Activated T-helper 1 cell treated with anti-CD3 and anti-CD28 coated beads, Interleukin-12 subunit alpha, Interleukin-12 subunit beta, Interleukin-2, Interleukin-4 antibody, amounts not matched to agents 30 ng/mL and 10 ng/mL and 1 ng/mL, durations not matched to agents 14 hours and 24 hours and 36 hours (primary cell): ENCODE measurements at regions of chr14 and their contacts with region 1.

Region 1: DNA sequence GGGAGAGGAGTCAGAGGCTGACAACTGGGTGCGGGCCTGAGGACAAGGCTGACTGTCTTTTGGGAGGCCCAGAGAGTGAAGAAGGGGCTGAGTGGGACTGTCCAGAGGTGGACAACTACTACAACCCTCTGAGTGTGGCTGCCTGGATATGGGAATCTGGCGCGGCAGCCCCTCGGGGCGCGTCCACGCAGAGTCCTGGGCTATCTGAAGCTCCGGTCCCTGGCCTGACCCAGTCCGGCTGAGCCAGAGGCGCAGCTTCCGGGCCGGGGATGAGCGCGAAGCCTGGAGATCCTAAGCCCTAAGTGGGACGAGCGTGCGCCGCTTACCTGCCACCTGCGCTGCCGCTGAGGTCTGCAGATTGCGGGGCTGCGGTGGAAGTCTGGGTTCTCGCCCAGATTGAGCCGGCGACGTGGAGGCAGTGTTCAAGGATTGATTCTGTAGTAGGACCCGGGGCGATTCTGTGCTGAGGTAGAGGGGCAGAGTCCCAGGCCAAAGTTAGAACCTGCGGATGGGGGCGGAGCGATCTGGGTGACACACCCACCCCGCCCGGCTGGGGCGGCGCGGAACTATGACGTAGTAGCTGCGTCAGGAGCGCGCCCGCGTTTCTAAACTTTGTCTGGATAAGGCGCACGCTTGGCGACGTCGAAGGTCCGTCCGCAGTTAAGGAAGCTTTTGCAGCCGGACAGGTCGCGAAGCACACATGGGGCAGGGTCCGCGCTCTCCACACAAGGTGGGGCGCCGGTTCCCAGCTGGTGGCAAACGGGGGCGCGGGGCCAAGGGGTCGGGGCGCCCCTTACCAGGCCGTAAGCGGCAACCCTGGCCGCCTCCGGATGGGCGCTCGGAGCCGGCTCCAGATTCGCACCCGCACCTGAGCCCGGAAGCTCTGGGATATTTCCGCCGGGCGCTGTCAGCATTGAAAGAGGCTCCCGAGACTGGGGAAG is at the starts of genes DHRS1 and NOP9:
- DNase-seq: peak; percentile 90
- H3K4me3 Mint-ChIP-seq: peak within 1 kb of the TSS; percentile 94
- H3K27ac Mint-ChIP-seq: peak within 1 kb of the TSS; percentile 96
- H3K4me1 Mint-ChIP-seq: peaks cover 44% of the 10 kb centered on the region
- H3K27me3 Mint-ChIP-seq: no peaks in the 10 kb centered on the region
- total RNA-seq, gene DHRS1: 7.5 TPM in 2 replicates
- total RNA-seq, gene NOP9: 49.3 and 52.6 TPM in 2 replicates

Region 2: GRCh38 chr14:24013654-24014514 is 285.6 kb before region 1 on chr14:
- intact Hi-C with region 1: loop called (anchors 1 kb)
- DNase-seq: peak; percentile 57
- H3K4me3 Mint-ChIP-seq: no peak overlapping the region
- H3K27ac Mint-ChIP-seq: no peak overlapping the region
- H3K4me1 Mint-ChIP-seq: peaks cover 23% of the 10 kb centered on the region
- H3K27me3 Mint-ChIP-seq: peaks cover 7% of the 10 kb centered on the region

Region 3: DNA sequence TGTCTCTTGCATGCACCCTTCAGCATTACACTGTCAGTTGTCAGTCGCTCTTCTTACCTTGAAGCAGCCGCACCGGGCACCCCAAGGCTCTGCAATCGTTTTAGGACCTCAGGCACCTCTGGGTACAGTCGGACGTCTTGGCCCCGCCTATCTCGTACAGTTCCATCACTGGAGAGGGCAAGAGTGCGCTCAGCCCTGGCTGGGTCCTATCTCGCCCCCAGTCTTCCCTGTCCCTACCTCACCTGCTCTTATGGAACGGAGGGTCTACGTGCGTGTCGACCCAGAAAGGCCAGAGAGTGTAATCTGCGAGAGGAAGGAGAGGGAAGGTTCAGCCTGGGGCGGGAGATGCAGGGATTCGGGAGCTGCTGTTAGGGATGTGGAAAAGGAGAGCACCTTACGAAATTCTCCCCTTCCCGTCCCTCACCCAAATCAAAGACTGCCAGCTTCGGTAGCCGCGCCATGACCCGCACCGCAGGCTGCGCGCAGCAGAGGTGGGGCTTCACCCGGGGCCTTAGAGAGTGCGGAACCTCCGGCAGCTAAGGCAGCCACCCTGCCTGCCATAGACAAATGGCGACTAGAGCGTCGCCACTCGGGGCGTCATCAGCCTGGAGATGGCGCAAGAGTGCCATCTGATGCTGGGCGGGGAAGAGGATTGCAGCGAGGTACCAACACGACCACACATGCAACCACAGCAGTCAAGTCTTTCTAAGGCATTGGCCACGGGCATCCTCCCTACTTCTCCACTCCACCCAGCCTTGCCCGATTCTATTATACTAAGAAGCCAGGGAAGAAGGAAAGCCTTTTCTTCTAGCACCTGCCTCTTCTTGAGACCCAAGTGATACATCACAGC is 83.8 kb before region 1 on chr14 and contains the start of gene MDP1:
- intact Hi-C with region 1: loop called (anchors 1 kb)
- DNase-seq: peak; percentile 85
- H3K4me3 Mint-ChIP-seq: peak within 1 kb of the TSS; percentile 90
- H3K27ac Mint-ChIP-seq: peak within 1 kb of the TSS; percentile 96
- H3K4me1 Mint-ChIP-seq: peaks cover 43% of the 10 kb centered on the region
- H3K27me3 Mint-ChIP-seq: no peaks in the 10 kb centered on the region
- total RNA-seq, gene MDP1: 11.6 and 12.9 TPM in 2 replicates

Region 4: GRCh38 chr14:24271134-24271833 is 28.2 kb before region 1 on chr14 and contains the start of gene RABGGTA:
- intact Hi-C with region 1: loop called (anchors 1 kb)
- DNase-seq: peak; percentile 87
- H3K4me3 Mint-ChIP-seq: peak within 1 kb of the TSS; percentile 93
- H3K27ac Mint-ChIP-seq: peak within 1 kb of the TSS; percentile 96
- H3K4me1 Mint-ChIP-seq: peaks cover 52% of the 10 kb centered on the region
- H3K27me3 Mint-ChIP-seq: no peaks in the 10 kb centered on the region
- total RNA-seq, gene RABGGTA: 52.2 and 54.4 TPM in 2 replicates

Region 5: GRCh38 chr14:24310646-24311604 is 11.4 kb after region 1 on chr14 and contains the start of gene LTB4R:
- intact Hi-C with region 1: loop called (anchors 1 kb)
- DNase-seq: peak; percentile 59
- H3K4me3 Mint-ChIP-seq: peak within 1 kb of the TSS; percentile 85
- H3K27ac Mint-ChIP-seq: peak within 1 kb of the TSS; percentile 84
- H3K4me1 Mint-ChIP-seq: peaks cover 81% of the 10 kb centered on the region
- H3K27me3 Mint-ChIP-seq: peaks cover 1% of the 10 kb centered on the region
- total RNA-seq, gene LTB4R: 10.1 and 11.1 TPM in 2 replicates